ENCODE measurements at regions of chr11 and their contacts with region 1.

Region 1: DNA sequence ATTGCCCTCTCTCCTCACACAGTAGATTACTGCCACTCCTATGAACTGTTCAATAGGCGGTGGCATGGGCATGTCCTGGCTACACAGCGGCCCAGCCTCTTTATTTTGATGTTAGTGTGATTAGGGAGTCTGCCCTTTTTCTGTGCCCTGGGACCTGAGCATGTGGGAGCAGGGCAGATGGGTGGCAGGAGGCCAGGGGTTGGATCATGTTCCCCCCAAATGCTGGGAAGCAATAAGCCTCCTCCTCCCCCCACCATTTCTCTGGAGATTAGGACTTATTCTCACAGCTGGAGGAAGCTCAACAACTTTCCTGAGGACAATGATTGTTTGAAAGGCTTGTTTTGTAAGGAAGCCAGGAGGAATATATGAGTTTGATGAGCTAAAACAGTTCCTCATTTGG is 848 bp downstream of the HEPN1 start:
- DNase-seq: no peak
- ATAC-seq: no peak
- H3K4me3 ChIP-seq: no peak overlapping the region
- H3K27ac ChIP-seq: no peak overlapping the region
- H3K4me1 ChIP-seq: no peaks in the 10 kb centered on the region
- H3K27me3 ChIP-seq: no peaks in the 10 kb centered on the region
- CTCF ChIP-seq: no peak

Region 2: DNA sequence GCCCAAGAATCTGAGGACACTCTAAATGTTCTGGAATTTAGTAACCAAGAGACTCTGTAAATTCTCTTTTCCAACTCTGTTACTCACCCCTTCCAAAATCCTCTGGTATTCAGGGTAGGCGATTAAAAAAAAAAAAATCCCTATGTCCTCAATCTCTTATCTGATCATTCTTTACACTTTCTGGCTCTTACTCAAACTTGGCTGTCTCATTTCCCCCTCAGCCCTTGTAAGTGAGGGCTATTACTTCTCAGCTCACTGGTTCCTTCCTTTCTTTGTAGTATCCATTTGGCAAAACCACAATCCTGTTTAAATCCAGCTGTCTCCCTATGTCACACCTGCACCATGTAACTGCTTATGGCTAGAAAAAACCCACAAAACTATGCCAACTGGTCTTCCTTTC is 107.0 kb before region 1 on chr11:
- CTCF ChIA-PET with region 1: no interaction called
- POLR2A ChIA-PET with region 1: no interaction called
- intact Hi-C with region 1: no loop called
- DNase-seq: peak; percentile 89
- ATAC-seq: peak; percentile 73
- H3K4me3 ChIP-seq: no peak overlapping the region; the same call in 1 of the 2 replicates
- H3K27ac ChIP-seq: peak overlapping the region; percentile 13
- H3K4me1 ChIP-seq: peaks cover 36% of the 10 kb centered on the region
- H3K27me3 ChIP-seq: no peaks in the 10 kb centered on the region
- CTCF ChIP-seq: no peak

Region 3: GRCh38 chr11:124875943-124876817 is 43.7 kb before region 1 on chr11:
- CTCF ChIA-PET with region 1: interaction called, 10 read pairs
- POLR2A ChIA-PET with region 1: no interaction called
- intact Hi-C with region 1: no loop called
- DNase-seq: peak; percentile 91
- ATAC-seq: peak; percentile 93
- H3K4me3 ChIP-seq: peak overlapping the region; percentile 76
- H3K27ac ChIP-seq: peak overlapping the region; percentile 61
- H3K4me1 ChIP-seq: peaks cover 12% of the 10 kb centered on the region
- H3K27me3 ChIP-seq: no peaks in the 10 kb centered on the region
- CTCF ChIP-seq: peak; percentile 94

Region 4: DNA sequence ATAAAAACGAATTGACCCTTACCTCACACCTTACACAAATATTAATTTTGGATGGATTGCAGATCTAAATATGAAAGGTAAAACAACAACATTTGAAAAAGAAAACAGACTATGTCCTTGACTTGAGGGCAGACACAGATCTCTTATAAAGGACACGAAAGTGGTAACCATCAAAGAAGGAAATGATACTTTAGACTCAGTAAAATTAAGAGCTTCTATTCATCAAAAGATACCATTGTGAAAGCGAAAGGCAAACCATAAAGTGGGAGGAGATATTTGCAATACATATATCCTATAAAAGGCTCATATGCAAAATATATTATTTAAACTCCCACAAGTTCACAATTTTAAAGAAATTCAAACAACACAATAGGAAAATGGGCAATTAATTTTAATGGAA is 10.9 kb after region 1 on chr11:
- CTCF ChIA-PET with region 1: interaction called, 13 read pairs
- POLR2A ChIA-PET with region 1: no interaction called
- intact Hi-C with region 1: no loop called
- DNase-seq: no peak
- ATAC-seq: no peak
- H3K4me3 ChIP-seq: no peak overlapping the region
- H3K27ac ChIP-seq: no peak overlapping the region
- H3K4me1 ChIP-seq: peaks cover 7% of the 10 kb centered on the region; the same call in 1 of the 2 replicates
- H3K27me3 ChIP-seq: no peaks in the 10 kb centered on the region
- CTCF ChIP-seq: no peak

Region 5: DNA sequence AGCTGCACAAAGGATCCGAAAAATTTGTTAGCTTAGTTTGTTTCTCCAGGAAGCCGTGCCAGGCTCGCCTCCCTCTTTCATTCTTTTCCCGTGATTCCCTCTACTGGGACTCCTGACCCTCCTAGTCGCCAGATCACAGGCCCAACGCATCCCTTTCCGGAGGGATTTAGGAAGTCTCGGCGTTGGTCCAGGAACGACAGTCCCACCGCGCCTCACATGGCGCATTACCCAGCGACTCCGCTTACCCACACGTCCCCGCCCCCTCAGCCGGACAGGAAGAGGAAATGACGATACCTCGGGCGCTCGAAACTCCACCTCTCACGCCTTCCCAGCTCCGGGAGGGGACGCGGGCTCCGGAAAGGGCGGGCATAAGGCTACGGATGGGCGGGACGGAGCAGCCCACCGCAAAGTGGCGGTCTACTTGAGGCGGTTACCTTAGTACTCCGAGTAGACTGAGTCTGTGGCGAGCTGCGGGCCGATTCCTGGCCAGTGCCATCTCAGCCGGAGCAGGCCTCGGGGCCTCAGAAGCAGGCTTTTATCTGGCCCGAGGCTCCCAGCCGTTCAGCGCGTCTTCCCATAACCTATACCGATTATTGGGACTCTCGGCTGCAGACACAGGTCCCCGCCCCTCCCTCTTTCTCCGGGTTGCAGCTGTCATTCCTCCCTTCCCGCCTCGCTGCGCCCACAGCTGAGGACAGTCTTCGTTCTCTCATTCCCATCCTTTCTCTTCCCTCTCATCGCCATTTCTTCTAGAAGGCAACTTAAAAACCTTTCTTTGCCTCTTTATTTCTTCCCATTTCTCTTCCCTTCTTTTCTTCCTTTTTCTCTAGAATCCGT is 34.1 kb after region 1 on chr11 and contains the start of gene CCDC15:
- CTCF ChIA-PET with region 1: no interaction called
- POLR2A ChIA-PET with region 1: no interaction called
- intact Hi-C with region 1: no loop called
- DNase-seq: peak; percentile 99
- ATAC-seq: peak; percentile 97
- H3K4me3 ChIP-seq: peak within 1 kb of the TSS; percentile 76
- H3K27ac ChIP-seq: peak within 1 kb of the TSS; percentile 70
- H3K4me1 ChIP-seq: peaks cover 24% of the 10 kb centered on the region
- H3K27me3 ChIP-seq: no peaks in the 10 kb centered on the region
- CTCF ChIP-seq: no peak
- total RNA-seq, gene CCDC15: 8.6 and 11.4 TPM in 2 replicates

Region 6: GRCh38 chr11:125123947-125124617 is 204.2 kb after region 1 on chr11:
- CTCF ChIA-PET with region 1: no interaction called
- POLR2A ChIA-PET with region 1: no interaction called
- intact Hi-C with region 1: no loop called
- DNase-seq: peak; percentile 88
- ATAC-seq: peak; percentile 97
- H3K4me3 ChIP-seq: no peak overlapping the region
- H3K27ac ChIP-seq: no peak overlapping the region
- H3K4me1 ChIP-seq: peaks cover 11% of the 10 kb centered on the region
- H3K27me3 ChIP-seq: no peaks in the 10 kb centered on the region; the same call in 1 of the 2 replicates
- CTCF ChIP-seq: peak; percentile 87

Measured in PC-3 (cell line).